Caco-2 (cell line): ENCODE measurements at regions of chr1 and their contacts with region 1.

Region 1: DNA sequence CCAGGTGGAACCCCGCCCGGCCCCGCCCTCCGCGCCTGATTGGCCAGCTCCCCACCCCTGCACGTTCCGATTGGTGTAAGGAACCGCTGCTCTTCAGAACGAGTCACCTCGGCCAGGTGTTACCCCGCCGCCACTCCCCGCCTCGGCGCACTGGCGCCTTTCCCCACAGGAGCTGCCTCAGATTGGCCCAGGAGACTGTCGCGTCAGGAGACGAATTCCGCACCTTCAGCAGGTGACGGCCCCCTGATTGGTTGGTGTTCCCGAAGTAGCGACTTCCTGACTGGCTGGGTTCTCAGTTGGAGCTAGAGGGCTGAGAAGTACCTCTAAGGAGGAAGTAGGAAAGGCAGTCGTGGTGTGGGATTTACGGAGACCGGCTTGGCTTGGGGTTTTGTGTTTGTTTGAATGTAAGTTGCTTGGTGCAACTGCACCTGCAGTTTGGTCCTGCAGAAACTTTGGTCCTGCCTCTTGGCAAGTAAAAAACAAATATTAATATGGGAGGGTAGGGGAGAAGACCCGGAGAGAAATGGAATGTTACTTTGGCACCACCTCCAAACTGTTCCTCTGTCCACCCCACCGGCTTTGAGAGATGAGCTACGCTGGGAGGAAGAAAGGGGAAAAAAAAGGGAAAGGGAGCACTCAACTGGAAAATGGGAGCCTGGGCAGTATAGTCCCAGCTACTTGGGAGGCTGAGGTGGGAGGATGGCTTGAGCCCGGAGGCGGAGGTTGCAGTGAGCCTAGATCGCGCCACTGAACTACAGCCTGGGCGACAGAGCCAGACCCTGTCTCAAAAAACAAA is 411 bp upstream of the F11R start:
- DNase-seq: peak; percentile 99 to 100
- H3K4me3 ChIP-seq: peak overlapping the region; percentile 67
- H3K4me3 Mint-ChIP-seq: peak overlapping the region; percentile 89
- H3K27ac Mint-ChIP-seq: peak overlapping the region; percentile 97
- H3K4me1 ChIP-seq: peaks cover 38% of the 10 kb centered on the region
- H3K4me1 Mint-ChIP-seq: peaks cover 50% of the 10 kb centered on the region
- H3K27me3 ChIP-seq: no peaks in the 10 kb centered on the region
- H3K27me3 Mint-ChIP-seq: no peaks in the 10 kb centered on the region
- CTCF ChIP-seq: no peak

Region 2: GRCh38 chr1:160981584-160982411 is 39.6 kb before region 1 on chr1:
- CTCF ChIA-PET with region 1: no interaction called
- POLR2A ChIA-PET with region 1: no interaction called
- intact Hi-C with region 1: no loop called
- DNase-seq: no peak
- H3K4me3 ChIP-seq: no peak overlapping the region
- H3K4me3 Mint-ChIP-seq: no peak overlapping the region
- H3K27ac Mint-ChIP-seq: no peak overlapping the region
- H3K4me1 ChIP-seq: no peaks in the 10 kb centered on the region
- H3K4me1 Mint-ChIP-seq: no peaks in the 10 kb centered on the region
- H3K27me3 ChIP-seq: no peaks in the 10 kb centered on the region
- H3K27me3 Mint-ChIP-seq: no peaks in the 10 kb centered on the region
- CTCF ChIP-seq: no peak

Region 3: GRCh38 chr1:161038523-161039153 is 17.3 kb after region 1 on chr1 and contains the start of gene TSTD1:
- CTCF ChIA-PET with region 1: interaction called, 4 read pairs
- POLR2A ChIA-PET with region 1: interaction called, 20 read pairs
- intact Hi-C with region 1: no loop called
- DNase-seq: peak; percentile 78 to 80
- H3K4me3 ChIP-seq: peak within 1 kb of the TSS; percentile 72
- H3K4me3 Mint-ChIP-seq: peak within 1 kb of the TSS; percentile 94
- H3K27ac Mint-ChIP-seq: peak within 1 kb of the TSS; percentile 87
- H3K4me1 ChIP-seq: peaks cover 7% of the 10 kb centered on the region; the same call in 1 of the 2 replicates
- H3K4me1 Mint-ChIP-seq: no peaks in the 10 kb centered on the region
- H3K27me3 ChIP-seq: no peaks in the 10 kb centered on the region
- H3K27me3 Mint-ChIP-seq: no peaks in the 10 kb centered on the region
- CTCF ChIP-seq: no peak
- total RNA-seq, gene TSTD1: 24.8 and 26.8 TPM in 2 replicates

Region 4: DNA sequence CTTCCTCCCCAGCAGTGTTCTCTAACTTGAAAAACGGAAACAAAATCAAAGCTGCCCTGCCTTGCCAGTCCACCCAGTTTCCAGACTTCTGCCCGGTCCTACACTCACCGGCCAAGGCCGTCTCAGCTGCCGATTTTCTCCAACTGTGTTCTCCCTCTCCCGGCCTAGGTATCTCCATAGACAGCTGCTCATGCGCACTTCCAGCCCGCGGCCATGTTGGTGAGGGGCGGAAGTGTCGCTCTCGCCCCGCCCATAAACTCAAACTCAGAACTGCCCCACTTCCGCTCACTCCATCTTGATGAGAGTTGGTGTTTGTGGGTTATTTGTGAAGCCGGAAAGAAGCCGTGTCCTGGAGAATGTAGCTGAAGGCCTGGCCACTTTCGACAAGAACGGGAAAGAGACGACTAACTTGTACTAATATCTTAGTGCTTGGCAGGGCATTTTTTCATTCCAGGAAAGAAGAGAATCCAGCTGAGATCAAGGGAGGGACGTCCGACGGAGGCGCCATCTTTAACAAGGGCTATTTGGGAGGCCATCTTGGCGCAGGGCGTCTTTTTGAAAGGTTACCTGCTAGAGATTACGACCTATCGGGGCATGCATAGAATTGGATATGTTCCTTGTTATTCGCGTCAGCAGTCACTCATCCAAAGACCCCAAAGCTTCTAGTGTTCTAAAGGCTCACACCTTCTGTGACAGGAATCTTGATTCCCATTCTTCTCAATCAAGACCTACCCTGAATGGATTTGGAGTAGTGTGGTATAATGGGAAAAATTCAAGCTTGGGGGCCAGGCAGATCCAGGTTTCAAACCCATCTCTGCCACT is 24.6 kb after region 1 on chr1 and contains the start of gene USF1:
- CTCF ChIA-PET with region 1: interaction called, 10 read pairs
- POLR2A ChIA-PET with region 1: interaction called, 84 read pairs
- intact Hi-C with region 1: loop called (anchors 1 kb)
- DNase-seq: peak; percentile 94 to 95
- H3K4me3 ChIP-seq: peak within 1 kb of the TSS; percentile 76
- H3K4me3 Mint-ChIP-seq: peak within 1 kb of the TSS; percentile 90
- H3K27ac Mint-ChIP-seq: peak within 1 kb of the TSS; percentile 95
- H3K4me1 ChIP-seq: peaks cover 6% of the 10 kb centered on the region
- H3K4me1 Mint-ChIP-seq: no peaks in the 10 kb centered on the region
- H3K27me3 ChIP-seq: no peaks in the 10 kb centered on the region
- H3K27me3 Mint-ChIP-seq: no peaks in the 10 kb centered on the region
- CTCF ChIP-seq: no peak
- total RNA-seq, gene USF1: 49.7 and 52.7 TPM in 2 replicates

Region 5: DNA sequence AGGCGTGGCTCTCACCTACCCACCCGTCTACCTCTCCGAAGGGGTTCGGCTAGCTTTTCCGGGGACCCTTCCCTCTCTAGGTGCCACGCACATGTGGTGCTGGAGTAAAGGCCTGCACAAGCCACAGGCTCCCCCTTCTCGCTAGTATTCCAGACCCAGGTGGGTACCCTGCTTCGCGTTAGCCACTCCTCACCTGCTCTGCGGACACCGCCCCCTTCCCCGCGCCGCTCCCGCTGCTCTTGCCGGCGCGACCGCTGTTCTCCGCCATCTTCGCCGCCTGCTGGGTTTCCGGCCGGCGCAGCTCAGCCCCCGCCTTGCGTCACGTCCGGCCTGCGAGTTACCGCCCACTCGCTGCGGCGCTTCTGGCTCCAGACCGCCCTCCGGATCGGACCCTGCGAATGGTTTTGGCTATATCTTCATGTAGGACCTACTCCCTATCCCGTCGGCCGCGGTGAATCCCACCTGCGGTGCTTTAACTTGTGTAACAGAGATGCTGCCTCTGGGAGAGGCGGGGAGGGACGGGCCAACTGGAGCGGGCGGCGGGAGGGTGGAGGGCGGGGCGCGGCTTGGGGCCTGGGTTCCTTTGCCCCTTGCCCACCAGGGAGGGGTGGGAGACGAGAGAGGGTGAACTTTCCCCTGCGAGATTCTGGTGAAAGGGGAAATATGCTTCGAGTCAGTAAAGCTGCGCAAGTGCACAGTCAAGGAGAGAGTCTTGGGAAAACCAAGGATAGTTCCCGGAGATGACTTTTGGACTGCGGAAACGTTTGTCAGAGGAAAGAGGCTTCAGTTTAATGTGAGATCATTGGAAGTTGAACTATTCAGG is 96.6 kb after region 1 on chr1 and contains the starts of genes NIT1 and PFDN2:
- CTCF ChIA-PET with region 1: interaction called, 3 read pairs
- POLR2A ChIA-PET with region 1: interaction called, 16 read pairs
- intact Hi-C with region 1: no loop called
- DNase-seq: peak; percentile 91 to 92
- H3K4me3 ChIP-seq: peak within 1 kb of the TSS; percentile 91
- H3K4me3 Mint-ChIP-seq: peak within 1 kb of the TSS; percentile 99
- H3K27ac Mint-ChIP-seq: peak within 1 kb of the TSS; percentile 96
- H3K4me1 ChIP-seq: peaks cover 17% of the 10 kb centered on the region
- H3K4me1 Mint-ChIP-seq: peaks cover 13% of the 10 kb centered on the region
- H3K27me3 ChIP-seq: no peaks in the 10 kb centered on the region
- H3K27me3 Mint-ChIP-seq: no peaks in the 10 kb centered on the region
- CTCF ChIP-seq: no peak
- total RNA-seq, gene NIT1: 41.8 and 42.1 TPM in 2 replicates
- total RNA-seq, gene PFDN2: 80.0 and 88.0 TPM in 2 replicates